ENCODE measurements at regions of chr2 and their contacts with region 1.

Region 1: GRCh38 chr2:113198790-113199612 is 25.2 kb downstream of the PSD4 start:
- DNase-seq: peak; percentile 80
- H3K4me3 Mint-ChIP-seq: peak overlapping the region; percentile 76
- H3K27ac Mint-ChIP-seq: peak overlapping the region; percentile 85
- H3K4me1 Mint-ChIP-seq: peaks cover 3% of the 10 kb centered on the region
- H3K27me3 Mint-ChIP-seq: no peaks in the 10 kb centered on the region
- CTCF ChIP-seq: peak; percentile 94

Region 2: GRCh38 chr2:112636231-112636960 is 562.6 kb before region 1 on chr2:
- CTCF ChIA-PET with region 1: no interaction called
- POLR2A ChIA-PET with region 1: no interaction called
- intact Hi-C with region 1: no loop called
- DNase-seq: no peak
- H3K4me3 Mint-ChIP-seq: no peak overlapping the region
- H3K27ac Mint-ChIP-seq: no peak overlapping the region
- H3K4me1 Mint-ChIP-seq: peaks cover 40% of the 10 kb centered on the region
- H3K27me3 Mint-ChIP-seq: no peaks in the 10 kb centered on the region
- CTCF ChIP-seq: no peak

Region 3: GRCh38 chr2:112866128-112866835 is 332.7 kb before region 1 on chr2:
- CTCF ChIA-PET with region 1: no interaction called
- POLR2A ChIA-PET with region 1: no interaction called
- intact Hi-C with region 1: no loop called
- DNase-seq: no peak
- H3K4me3 Mint-ChIP-seq: no peak overlapping the region
- H3K27ac Mint-ChIP-seq: no peak overlapping the region
- H3K4me1 Mint-ChIP-seq: peaks cover 23% of the 10 kb centered on the region
- H3K27me3 Mint-ChIP-seq: no peaks in the 10 kb centered on the region
- CTCF ChIP-seq: no peak

Region 4: DNA sequence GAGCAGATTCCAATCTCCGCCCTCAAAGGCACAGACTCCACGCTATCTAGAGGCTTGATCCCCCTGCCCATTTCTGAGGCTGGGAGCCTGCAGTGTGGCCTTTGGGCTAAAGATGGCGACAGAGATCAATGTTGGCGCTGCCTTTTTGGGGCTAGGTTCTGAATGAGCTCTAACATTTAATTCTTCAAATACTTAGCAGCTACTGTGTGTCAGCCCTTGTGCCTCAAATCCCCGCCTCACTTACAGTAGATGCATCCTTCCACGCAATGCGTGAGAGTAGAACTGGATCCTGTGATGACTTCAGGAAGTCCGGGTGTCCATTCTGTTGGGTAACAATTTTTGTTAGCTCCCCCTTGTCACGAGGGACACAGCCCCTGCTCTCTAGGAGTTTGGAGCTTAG is 118.9 kb before region 1 on chr2:
- CTCF ChIA-PET with region 1: interaction called, 267 read pairs
- POLR2A ChIA-PET with region 1: interaction called, 52 read pairs
- intact Hi-C with region 1: loop called (anchors 1 kb)
- DNase-seq: peak; percentile 62
- H3K4me3 Mint-ChIP-seq: no peak overlapping the region
- H3K27ac Mint-ChIP-seq: no peak overlapping the region
- H3K4me1 Mint-ChIP-seq: peaks cover 36% of the 10 kb centered on the region
- H3K27me3 Mint-ChIP-seq: no peaks in the 10 kb centered on the region
- CTCF ChIP-seq: peak; percentile 86

Region 5: DNA sequence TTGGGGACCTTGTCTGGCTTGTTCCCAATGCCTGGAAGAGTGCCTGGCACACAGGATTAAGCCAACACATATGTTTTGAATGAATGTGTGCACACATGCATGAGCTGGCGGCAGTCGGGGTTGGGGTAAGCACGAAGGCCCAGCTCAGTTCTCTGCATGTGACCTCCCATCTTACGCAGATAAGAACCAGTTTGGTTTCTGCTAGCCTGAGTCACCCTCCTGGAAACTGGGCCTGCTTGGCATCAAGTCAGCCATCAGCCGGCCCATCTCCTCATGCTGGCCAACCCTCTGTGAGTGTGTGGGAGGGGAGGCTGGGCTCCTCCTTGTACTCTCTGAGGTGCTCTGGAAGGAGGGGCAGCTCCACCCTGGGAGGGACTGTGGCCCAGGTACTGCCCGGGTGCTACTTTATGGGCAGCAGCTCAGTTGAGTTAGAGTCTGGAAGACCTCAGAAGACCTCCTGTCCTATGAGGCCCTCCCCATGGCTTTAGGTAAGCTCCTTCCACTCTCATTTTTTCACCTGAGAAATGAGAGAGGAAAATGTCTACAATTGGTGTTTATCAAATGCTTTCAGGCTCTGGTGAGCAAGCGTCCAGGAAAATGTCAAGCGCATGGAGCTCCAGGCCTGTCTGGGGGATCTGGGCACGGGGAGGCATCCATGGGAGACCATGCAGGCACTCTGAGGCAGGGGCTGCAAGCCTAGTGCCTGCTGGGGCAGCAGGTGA is 81.3 kb before region 1 on chr2:
- CTCF ChIA-PET with region 1: interaction called, 15 read pairs
- POLR2A ChIA-PET with region 1: no interaction called
- intact Hi-C with region 1: no loop called
- DNase-seq: peak; percentile 94
- H3K4me3 Mint-ChIP-seq: no peak overlapping the region
- H3K27ac Mint-ChIP-seq: peak overlapping the region; percentile 81
- H3K4me1 Mint-ChIP-seq: peaks cover 13% of the 10 kb centered on the region
- H3K27me3 Mint-ChIP-seq: no peaks in the 10 kb centered on the region
- CTCF ChIP-seq: no peak

Region 6: DNA sequence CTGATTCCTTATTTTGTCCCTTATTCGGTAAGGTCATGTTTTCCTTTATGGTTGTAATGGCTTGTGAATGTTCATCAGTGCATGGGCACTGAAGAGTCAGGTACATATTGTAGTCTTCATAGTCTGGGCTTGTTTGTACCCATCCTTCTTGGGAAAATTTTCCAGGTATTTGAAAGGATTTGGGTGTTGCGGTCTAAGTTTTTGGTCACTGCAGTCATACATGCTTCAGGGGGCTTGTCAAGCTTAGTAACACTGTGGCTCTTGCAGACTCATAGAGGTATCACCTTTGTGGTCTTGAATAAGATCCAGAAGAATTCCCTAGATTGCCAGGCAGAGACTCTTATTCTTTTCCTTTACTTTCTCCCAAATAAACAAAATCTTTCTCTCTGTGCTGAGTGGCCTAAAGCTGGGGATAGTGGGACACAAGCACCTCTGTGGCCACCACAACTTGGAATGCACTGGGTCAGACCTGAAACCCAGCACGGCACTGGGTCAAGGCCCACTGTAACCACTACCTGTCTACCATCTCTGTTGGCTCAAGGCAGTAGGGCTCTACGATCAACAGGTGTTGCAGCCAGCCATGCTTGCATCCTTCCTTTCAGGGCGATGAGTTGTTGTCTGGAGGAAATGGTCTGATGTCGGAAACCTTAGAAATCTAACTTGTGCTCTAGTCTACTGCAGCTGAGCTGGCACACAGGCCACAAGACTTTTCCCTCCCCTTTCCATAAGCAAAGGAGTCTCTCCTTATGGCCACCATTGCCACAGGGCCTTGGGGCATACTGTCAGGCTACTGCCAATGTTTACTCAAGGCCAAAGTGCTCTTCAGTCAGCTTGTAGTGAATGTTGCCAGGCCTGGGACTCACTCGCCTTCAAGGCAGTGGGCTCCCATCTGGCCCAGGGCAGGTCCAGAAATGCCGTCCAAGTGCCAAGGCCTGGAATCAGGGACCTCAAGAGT is 50.1 kb before region 1 on chr2:
- CTCF ChIA-PET with region 1: interaction called, 179 read pairs
- POLR2A ChIA-PET with region 1: interaction called, 9 read pairs
- intact Hi-C with region 1: no loop called
- DNase-seq: no peak
- H3K4me3 Mint-ChIP-seq: no peak overlapping the region
- H3K27ac Mint-ChIP-seq: no peak overlapping the region
- H3K4me1 Mint-ChIP-seq: no peaks in the 10 kb centered on the region
- H3K27me3 Mint-ChIP-seq: no peaks in the 10 kb centered on the region
- CTCF ChIP-seq: no peak

Region 7: DNA sequence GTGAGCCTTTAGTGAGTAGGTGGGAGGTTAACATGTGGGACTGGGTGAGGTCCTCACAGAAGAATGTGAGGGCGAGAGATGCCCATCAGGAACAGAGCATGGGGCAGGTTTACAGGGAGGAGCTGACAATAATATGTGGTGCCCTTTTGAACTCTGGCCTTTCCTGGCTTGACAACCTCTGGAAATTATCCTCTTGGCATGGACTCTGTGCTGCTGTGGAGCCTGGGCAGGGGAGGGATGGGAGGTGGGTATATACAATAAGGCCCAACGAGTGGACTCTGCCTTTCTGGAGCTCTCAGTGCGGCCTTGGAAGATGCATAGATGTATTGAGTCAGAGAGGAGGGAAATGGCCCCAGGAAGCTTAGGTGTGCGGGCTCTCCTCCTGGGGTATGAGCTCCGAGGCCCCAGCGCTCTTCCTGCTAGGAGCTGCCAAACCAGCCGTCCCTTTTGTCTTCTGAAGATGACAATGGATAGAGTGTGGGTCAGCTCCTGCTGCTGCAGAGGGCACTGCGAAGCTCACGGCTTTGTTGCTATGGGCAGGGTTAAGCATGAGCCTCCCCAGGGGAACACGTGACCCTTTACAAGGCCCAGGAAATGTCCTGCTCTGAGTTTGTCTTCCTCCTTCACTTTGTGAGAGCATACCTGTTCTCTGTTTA is 33.9 kb before region 1 on chr2:
- CTCF ChIA-PET with region 1: interaction called, 14 read pairs
- POLR2A ChIA-PET with region 1: no interaction called
- intact Hi-C with region 1: no loop called
- DNase-seq: no peak
- H3K4me3 Mint-ChIP-seq: no peak overlapping the region
- H3K27ac Mint-ChIP-seq: no peak overlapping the region
- H3K4me1 Mint-ChIP-seq: peaks cover 17% of the 10 kb centered on the region
- H3K27me3 Mint-ChIP-seq: no peaks in the 10 kb centered on the region
- CTCF ChIP-seq: no peak

Region 8: GRCh38 chr2:113183703-113184102 is 15.3 kb before region 1 on chr2:
- CTCF ChIA-PET with region 1: interaction called, 15 read pairs
- POLR2A ChIA-PET with region 1: interaction called, 8 read pairs
- intact Hi-C with region 1: no loop called
- DNase-seq: no peak
- H3K4me3 Mint-ChIP-seq: no peak overlapping the region
- H3K27ac Mint-ChIP-seq: no peak overlapping the region
- H3K4me1 Mint-ChIP-seq: no peaks in the 10 kb centered on the region
- H3K27me3 Mint-ChIP-seq: no peaks in the 10 kb centered on the region
- CTCF ChIP-seq: no peak

Region 9: DNA sequence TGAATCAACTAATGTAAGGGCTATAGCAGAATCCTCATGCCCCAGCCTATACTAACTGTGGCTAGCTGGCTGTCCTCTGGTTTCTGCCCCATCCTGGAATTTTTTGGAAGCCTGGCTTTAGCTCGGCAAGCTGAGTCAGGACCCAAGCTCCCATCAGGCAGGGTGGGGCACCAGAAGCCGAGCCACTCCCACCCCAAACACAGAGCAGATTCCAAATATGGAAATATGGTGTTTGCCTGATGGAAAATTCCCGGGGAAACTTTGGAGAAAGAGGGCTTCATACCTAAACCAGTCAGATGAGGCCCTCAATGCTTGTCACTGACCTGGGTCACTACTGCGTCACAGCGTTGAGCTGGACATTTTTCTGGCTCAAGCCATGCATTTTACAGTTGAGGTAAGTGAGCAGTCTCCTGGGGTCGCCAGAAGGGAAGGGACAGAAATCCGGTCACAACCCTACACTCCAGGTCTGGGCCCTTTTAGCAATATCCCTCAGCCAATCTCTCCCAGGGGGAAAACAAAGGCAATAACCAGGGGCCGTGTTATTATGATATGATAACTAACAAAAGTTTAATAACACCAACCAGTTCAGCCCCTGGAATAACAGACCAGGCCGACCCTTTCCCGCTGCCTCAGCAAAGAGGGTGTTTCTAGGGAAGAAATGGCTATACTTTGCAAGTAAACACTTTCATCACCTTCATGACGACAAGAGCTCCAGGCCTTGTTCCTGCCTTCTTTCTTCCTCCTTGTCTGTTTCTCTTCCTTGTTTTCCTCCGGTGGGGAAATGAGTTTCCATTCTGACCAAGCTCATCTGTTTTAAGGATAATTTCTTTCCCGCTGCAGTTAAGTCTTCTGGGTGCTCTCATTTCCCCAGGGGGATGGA is 12.5 kb after region 1 on chr2:
- CTCF ChIA-PET with region 1: interaction called, 23 read pairs
- POLR2A ChIA-PET with region 1: interaction called, 8 read pairs
- intact Hi-C with region 1: no loop called
- DNase-seq: peak; percentile 78
- H3K4me3 Mint-ChIP-seq: no peak overlapping the region
- H3K27ac Mint-ChIP-seq: peak overlapping the region; percentile 92
- H3K4me1 Mint-ChIP-seq: peaks cover 30% of the 10 kb centered on the region
- H3K27me3 Mint-ChIP-seq: no peaks in the 10 kb centered on the region
- CTCF ChIP-seq: no peak